ENCODE measurements at regions of chr2 and their contacts with region 1.

Region 1: GRCh38 chr2:113203901-113204519 is 30.2 kb downstream of the PSD4 start:
- DNase-seq: peak; percentile 80
- ATAC-seq: peak; percentile 58

Region 2: DNA sequence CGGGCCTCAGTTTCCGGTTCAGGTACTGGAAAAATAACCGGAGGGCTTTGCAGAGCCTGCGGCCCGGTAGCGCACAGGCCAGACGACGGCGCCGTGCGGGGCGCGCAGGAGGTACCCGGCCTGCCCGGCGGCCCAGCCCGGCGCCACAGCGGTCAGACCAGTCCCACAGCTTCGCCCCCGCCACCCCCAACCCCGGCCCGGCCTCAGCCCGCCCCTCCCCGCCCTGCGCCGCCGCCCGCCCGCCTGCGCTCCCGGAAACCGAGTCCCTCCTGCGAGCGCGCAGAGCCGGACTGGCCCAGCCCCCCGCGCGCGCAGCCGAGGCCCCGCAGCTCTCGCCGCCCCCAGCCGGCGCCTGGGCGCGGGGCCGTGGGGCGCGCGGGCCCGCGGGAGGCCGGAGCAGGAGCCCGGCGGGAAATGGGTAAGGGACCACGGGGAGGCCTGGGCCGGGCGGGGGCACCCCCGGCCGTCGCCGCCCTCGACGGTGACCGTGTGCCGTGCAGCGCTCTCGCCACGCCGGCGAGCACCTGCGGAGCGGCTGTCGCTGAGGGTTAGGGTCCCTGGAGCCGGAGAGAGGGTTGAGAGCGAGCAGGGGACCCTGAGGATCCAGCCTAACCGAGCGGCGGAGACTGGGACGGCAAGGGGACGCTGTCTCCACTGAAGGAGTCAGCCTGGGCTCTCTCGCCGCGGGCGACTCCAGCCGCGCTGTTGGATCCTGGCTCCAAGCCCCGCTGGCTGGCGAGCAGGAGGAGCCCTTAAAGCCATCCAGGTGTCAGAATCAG is 46.7 kb before region 1 on chr2:
- intact Hi-C with region 1: no loop called
- DNase-seq: peak; percentile 61
- ATAC-seq: peak; percentile 52

Region 3: DNA sequence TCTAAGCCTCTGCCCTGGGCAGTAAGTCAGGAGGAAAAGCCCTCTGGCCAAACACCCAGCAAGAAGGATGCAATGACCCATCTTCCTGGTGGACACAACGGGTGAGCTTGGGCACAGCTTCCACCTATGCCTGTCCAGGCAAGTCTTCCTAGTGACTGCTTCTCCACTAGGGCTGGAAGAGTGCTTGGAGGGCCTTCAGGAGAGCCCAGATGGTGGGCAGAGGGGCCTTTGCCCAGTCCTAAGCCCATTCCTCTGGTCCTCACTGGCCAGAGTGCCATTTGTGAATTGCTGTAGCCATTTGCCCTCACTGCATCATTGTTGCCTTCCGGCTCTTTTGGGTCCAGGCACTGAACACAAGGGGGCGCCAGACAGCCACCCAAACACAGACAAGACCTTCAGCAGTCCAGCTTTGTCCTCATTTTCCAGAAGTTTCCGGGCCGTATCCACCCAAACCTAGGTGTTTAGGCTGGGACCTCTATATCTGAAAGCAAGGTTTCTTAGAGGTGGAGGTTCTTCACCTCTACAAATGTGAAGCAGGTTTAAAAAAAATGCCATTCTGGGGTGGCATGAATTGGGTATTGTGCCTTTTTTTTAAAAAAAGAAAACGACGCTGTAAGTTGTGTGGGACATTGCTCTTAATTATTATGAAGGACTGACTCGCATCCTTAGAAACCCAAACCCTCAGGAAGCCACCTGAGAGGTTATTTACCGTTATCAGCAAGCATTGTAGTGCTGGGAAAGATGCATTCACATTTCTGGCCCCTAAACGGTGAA is 45.2 kb after region 1 on chr2:
- intact Hi-C with region 1: loop called (anchors 2 kb)
- DNase-seq: peak; percentile 88
- ATAC-seq: peak; percentile 82

Region 4: DNA sequence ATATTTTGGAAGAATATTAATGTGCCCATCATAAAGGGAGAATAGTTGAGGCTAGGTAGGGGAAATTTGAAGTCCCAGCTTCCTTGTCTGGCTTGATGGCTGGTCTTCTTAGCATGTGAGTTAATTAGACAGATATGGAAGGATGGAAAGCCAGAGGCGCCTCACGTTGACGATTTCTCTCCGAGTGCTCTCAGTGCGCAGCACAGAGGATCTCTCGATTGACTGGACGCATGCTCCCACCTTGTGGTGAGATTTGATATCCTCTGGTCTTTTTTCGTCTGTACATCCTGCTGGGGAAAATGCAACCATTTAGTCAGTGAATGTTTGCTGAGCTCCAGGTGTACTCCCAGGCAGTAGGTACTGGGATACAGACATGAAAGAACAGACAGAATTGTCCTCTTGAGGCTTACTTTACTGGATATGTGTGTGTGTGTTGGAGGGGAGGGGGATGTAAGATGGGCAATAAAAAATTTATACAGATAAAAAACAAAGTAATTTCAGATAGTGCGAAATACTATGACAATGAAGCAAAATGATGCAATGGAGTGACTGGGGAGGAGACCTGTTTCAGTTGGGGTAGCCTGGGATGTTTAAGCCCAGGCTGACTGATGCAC is 166.6 kb after region 1 on chr2:
- intact Hi-C with region 1: loop called (anchors 1 kb)
- DNase-seq: no peak
- ATAC-seq: peak; percentile 86